ENCODE measurements at regions of chr17 and their contacts with region 1.

Region 1: GRCh38 chr17:6640536-6641373 is at the starts of genes KIAA0753 and TXNDC17:
- DNase-seq: peak; percentile 85

Region 2: GRCh38 chr17:6651357-6651918 is 10.7 kb after region 1 on chr17 and contains the starts of genes C17orf100 and MED31:
- CTCF ChIA-PET with region 1: interaction called, 3 read pairs
- POLR2A ChIA-PET with region 1: interaction called, 12 read pairs
- DNase-seq: peak; percentile 95

Measured in HEK293T (cell line).